B cell (primary cell): ENCODE measurements at regions of chr13 and their contacts with region 1.

Region 1: GRCh38 chr13:49760558-49760957 is 31.9 kb downstream of the KPNA3 start:
- DNase-seq: no peak
- ATAC-seq: no peak
- H3K4me3 ChIP-seq: no peak overlapping the region
- H3K4me3 Mint-ChIP-seq: no peak overlapping the region
- H3K27ac ChIP-seq: no peak overlapping the region
- H3K27ac Mint-ChIP-seq: no peak overlapping the region
- H3K4me1 ChIP-seq: peaks cover 0 to 6% of the 10 kb centered on the region in 2 donors
- H3K4me1 Mint-ChIP-seq: peaks cover 40% of the 10 kb centered on the region
- H3K27me3 ChIP-seq: no peaks in the 10 kb centered on the region
- H3K27me3 Mint-ChIP-seq: no peaks in the 10 kb centered on the region
- CTCF ChIP-seq: no peak

Region 2: GRCh38 chr13:48184260-48184659 is 1576.3 kb before region 1 on chr13:
- CTCF ChIA-PET with region 1: no interaction called
- POLR2A ChIA-PET with region 1: no interaction called
- intact Hi-C with region 1: loop called (anchors 5 kb)
- DNase-seq: peak; percentile 23
- ATAC-seq: no peak
- H3K4me3 ChIP-seq: no peak overlapping the region
- H3K4me3 Mint-ChIP-seq: peak overlapping the region; percentile 43
- H3K27ac ChIP-seq: peak overlapping the region; percentile 46 to 70
- H3K27ac Mint-ChIP-seq: peak overlapping the region; percentile 62
- H3K4me1 ChIP-seq: peaks cover 59 to 68% of the 10 kb centered on the region in 2 donors
- H3K4me1 Mint-ChIP-seq: peaks cover 59% of the 10 kb centered on the region
- H3K27me3 ChIP-seq: no peaks in the 10 kb centered on the region
- H3K27me3 Mint-ChIP-seq: no peaks in the 10 kb centered on the region
- CTCF ChIP-seq: no peak